Heart right ventricle (tissue), 16 donors: ENCODE measurements at regions of chr3 and their contacts with region 1.

Region 1: GRCh38 chr3:50542177-50543034 is 25.1 kb downstream of the C3orf18 start:
- DNase-seq: peak; percentile 57 to 64
- ATAC-seq: peak; percentile 67 to 89 (median 74)
- H3K4me3 ChIP-seq: no peak overlapping the region
- H3K27ac ChIP-seq: no peak overlapping the region
- H3K4me1 ChIP-seq: no peaks in the 10 kb centered on the region
- H3K27me3 ChIP-seq: peaks cover 0 to 7% (median 0%) of the 10 kb centered on the region in 7 donors
- CTCF ChIP-seq: peak; percentile 86 to 93 (median 91)

Region 2: DNA sequence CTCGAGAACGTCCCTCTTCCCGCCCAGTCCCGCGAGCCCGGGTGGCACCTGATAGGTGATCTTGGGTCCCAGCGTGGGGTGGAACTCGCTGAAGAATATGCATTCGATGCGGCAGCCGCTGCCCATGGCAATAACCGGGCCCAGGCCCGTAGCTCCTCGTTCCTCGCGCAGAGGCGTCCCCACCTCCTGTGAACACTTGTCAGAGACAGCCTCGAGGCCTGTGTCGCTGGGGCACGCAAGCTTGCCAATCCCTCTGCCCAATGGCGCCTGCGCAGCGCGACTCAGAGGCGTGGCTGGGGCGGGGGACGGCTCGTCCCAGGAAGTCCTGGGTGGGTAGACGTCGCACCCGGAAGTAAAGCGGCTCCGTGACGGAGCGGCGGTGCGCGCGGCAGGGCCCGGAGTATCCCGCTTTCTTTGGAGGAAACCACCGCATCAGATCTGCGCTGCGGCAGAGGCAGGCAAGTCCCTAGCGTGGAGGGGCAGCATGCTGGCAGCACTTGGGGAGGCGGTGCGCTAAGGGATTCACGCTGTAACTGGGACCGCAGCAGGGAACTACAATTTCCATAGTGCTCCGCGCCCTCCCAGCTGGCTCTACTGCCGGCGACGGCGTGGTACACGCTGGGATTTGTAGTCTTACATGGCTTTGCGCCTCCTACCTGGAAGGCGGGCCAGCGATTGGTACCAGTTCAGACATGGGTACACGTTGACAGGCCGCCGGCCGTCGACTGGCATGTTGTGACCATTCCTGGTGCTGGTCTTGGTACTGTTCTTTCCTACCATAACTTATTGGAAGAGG is 191.7 kb before region 1 on chr3 and contains the starts of genes CYB561D2 and NPRL2:
- intact Hi-C with region 1: loop called (anchors 1 to 5 kb)
- DNase-seq: peak; percentile 96 to 98
- ATAC-seq: peak; percentile 94 to 97 (median 96)
- H3K4me3 ChIP-seq: peak within 1 kb of the TSS; percentile 42 to 89 (median 72)
- H3K27ac ChIP-seq: peak within 1 kb of the TSS; percentile 84 to 97 (median 92)
- H3K4me1 ChIP-seq: peaks cover 21 to 63% (median 42%) of the 10 kb centered on the region in 9 donors
- H3K27me3 ChIP-seq: no peaks in the 10 kb centered on the region
- CTCF ChIP-seq: no peak
- total RNA-seq, gene CYB561D2: 3.9 to 10.9 (median 5.6) TPM
- total RNA-seq, gene NPRL2: 13.0 to 23.6 (median 16.3) TPM

Region 3: GRCh38 chr3:50365080-50365841 is 177.1 kb before region 1 on chr3:
- intact Hi-C with region 1: loop called in 4 of 10 experiments (anchors 5 to 10 kb)
- DNase-seq: peak; percentile 80 to 86
- ATAC-seq: peak; percentile 81 to 92 (median 86)
- H3K4me3 ChIP-seq: peak overlapping the region; percentile 19 to 60 (median 54)
- H3K27ac ChIP-seq: peak overlapping the region in 6 of 10 donors; percentile 7 to 50 (median 31)
- H3K4me1 ChIP-seq: peaks cover 0 to 18% (median 6%) of the 10 kb centered on the region in 9 donors
- H3K27me3 ChIP-seq: peaks cover 0 to 3% (median 0%) of the 10 kb centered on the region in 7 donors
- CTCF ChIP-seq: no peak

Region 4: GRCh38 chr3:50370594-50370993 is 171.8 kb before region 1 on chr3:
- intact Hi-C with region 1: loop called in 4 of 10 experiments (anchors 5 to 10 kb)
- DNase-seq: no peak
- ATAC-seq: peak in 1 of 8 donors; percentile 13
- H3K4me3 ChIP-seq: no peak overlapping the region
- H3K27ac ChIP-seq: no peak overlapping the region
- H3K4me1 ChIP-seq: peaks cover 0 to 4% (median 0%) of the 10 kb centered on the region in 9 donors
- H3K27me3 ChIP-seq: peaks cover 0 to 3% (median 0%) of the 10 kb centered on the region in 7 donors
- CTCF ChIP-seq: peak in 2 of 9 donors; percentile 23 to 30

Region 5: DNA sequence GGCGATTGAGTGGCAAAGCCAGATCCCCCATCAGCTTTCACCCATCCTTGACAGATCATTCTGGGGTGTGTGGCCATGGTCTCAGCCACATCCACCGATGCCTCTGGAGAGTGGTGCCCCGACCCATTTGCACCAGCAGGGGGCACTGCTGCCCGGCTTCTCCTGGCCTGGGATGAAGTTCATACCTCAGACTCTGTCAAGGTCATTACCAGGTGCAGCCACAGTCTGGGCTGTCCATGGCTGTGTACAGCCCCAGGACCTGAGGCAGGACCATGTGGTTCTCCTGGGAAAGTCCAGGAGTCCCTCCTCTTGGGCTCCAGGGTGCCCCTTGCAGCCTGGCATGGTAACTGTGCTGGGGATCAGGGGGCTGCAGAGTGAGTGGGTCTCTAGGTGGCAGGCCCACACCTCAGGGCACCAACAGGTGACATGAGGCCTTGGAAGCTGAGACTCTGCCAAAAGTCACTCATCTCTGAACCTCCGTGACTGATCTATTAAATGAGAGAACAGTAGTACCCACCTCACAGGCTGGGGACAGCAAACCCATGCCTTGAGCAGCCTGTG is 106.2 kb before region 1 on chr3:
- intact Hi-C with region 1: loop called (anchors 1 to 5 kb)
- DNase-seq: peak; percentile 58 to 74
- ATAC-seq: peak; percentile 78 to 90 (median 82)
- H3K4me3 ChIP-seq: no peak overlapping the region
- H3K27ac ChIP-seq: no peak overlapping the region
- H3K4me1 ChIP-seq: peaks cover 0 to 14% (median 0%) of the 10 kb centered on the region in 9 donors
- H3K27me3 ChIP-seq: no peaks in the 10 kb centered on the region
- CTCF ChIP-seq: peak; percentile 81 to 94 (median 86)